ENCODE measurements at regions of chr1 and their contacts with region 1.

Region 1: GRCh38 chr1:19811206-19811851 is 3.8 kb downstream of the RNF186 start:
- DNase-seq: peak; percentile 61
- H3K4me3 Mint-ChIP-seq: no peak overlapping the region
- H3K27ac Mint-ChIP-seq: no peak overlapping the region
- H3K4me1 Mint-ChIP-seq: peaks cover 5% of the 10 kb centered on the region
- H3K27me3 Mint-ChIP-seq: peaks cover 11% of the 10 kb centered on the region
- CTCF ChIP-seq: peak; percentile 52

Region 2: GRCh38 chr1:19715334-19716203 is 95.8 kb before region 1 on chr1:
- CTCF ChIA-PET with region 1: no interaction called
- POLR2A ChIA-PET with region 1: no interaction called
- intact Hi-C with region 1: loop called (anchors 1 kb)
- DNase-seq: peak; percentile 95
- H3K4me3 Mint-ChIP-seq: no peak overlapping the region
- H3K27ac Mint-ChIP-seq: peak overlapping the region; percentile 50
- H3K4me1 Mint-ChIP-seq: no peaks in the 10 kb centered on the region
- H3K27me3 Mint-ChIP-seq: no peaks in the 10 kb centered on the region
- CTCF ChIP-seq: peak; percentile 75

Region 3: DNA sequence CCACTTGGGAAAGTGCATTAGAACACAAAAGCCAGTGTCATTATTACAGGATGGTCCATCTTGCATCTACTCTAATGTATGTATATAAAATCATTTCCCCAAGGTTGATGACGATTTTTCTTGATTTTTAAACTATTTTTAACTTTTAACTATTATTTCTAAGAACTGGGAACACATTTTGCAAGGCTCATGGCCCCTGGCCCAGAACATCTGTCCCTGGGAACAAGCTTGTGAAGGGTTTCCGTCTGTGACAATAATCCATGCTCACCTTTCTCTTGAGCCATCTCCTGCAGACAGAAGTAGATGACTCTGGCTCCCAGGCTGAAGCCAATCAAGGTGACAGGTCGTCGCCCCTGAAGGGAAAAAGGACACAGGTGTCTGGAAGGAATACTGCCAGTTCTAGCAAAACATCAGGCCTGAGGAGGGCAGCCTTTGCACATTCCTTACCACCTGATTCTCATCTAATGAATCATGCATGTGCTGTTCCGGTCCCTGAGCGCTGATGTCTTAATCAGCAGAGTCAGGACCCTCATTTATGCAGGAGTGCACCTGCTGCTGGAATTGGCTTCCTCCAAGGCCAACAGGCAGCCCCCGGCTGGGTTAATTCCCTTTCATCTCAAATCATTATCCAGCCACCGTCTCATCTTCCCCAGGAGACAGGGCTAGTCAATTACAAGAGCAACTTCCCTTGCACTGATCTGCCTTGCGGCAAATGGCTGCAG is 74.1 kb before region 1 on chr1:
- CTCF ChIA-PET with region 1: no interaction called
- POLR2A ChIA-PET with region 1: no interaction called
- intact Hi-C with region 1: loop called (anchors 1 kb)
- DNase-seq: peak; percentile 50
- H3K4me3 Mint-ChIP-seq: no peak overlapping the region
- H3K27ac Mint-ChIP-seq: no peak overlapping the region
- H3K4me1 Mint-ChIP-seq: peaks cover 7% of the 10 kb centered on the region
- H3K27me3 Mint-ChIP-seq: no peaks in the 10 kb centered on the region
- CTCF ChIP-seq: no peak

Region 4: GRCh38 chr1:19852036-19852435 is 40.7 kb after region 1 on chr1:
- CTCF ChIA-PET with region 1: no interaction called
- POLR2A ChIA-PET with region 1: no interaction called
- intact Hi-C with region 1: no loop called
- DNase-seq: no peak
- H3K4me3 Mint-ChIP-seq: no peak overlapping the region
- H3K27ac Mint-ChIP-seq: no peak overlapping the region
- H3K4me1 Mint-ChIP-seq: no peaks in the 10 kb centered on the region
- H3K27me3 Mint-ChIP-seq: no peaks in the 10 kb centered on the region
- CTCF ChIP-seq: no peak

Measured in MCF 10A (cell line).